AG04450 (cell line): ENCODE measurements at regions of chr7 and their contacts with region 1.

Region 1: GRCh38 chr7:5997222-5997808 is 11.5 kb downstream of the PMS2 start:
- DNase-seq: peak; percentile 32
- H3K4me3 ChIP-seq: no peak overlapping the region
- H3K27ac ChIP-seq: no peak overlapping the region
- H3K27me3 ChIP-seq: no peaks in the 10 kb centered on the region
- CTCF ChIP-seq: peak; percentile 69

Region 2: GRCh38 chr7:5514440-5515035 is 482.8 kb before region 1 on chr7:
- CTCF ChIA-PET with region 1: no interaction called
- POLR2A ChIA-PET with region 1: no interaction called
- DNase-seq: no peak
- H3K4me3 ChIP-seq: peak overlapping the region; percentile 99
- H3K27ac ChIP-seq: peak overlapping the region; percentile 98
- H3K27me3 ChIP-seq: no peaks in the 10 kb centered on the region
- CTCF ChIP-seq: no peak

Region 3: DNA sequence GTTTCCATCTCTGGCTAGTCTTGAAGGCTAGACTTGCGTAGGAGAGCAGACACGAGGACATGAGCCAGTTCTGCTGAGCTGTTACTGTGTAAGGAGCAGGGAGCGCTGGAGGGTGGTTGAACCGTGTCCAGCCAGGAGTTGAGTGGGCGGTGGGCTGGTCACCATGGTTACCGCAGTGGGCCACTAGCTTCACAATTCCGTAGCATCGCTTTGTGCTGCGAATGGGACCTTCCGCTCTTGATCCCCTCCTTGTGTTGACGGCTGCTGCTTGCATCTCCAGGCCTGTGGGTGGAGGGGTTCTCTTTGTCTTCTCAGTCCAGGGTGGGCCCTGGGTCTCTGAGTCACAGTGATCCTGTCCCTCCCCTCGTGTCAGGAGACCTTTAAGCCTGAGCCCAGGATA is 166.1 kb before region 1 on chr7:
- CTCF ChIA-PET with region 1: no interaction called
- POLR2A ChIA-PET with region 1: no interaction called
- DNase-seq: no peak
- H3K4me3 ChIP-seq: no peak overlapping the region
- H3K27ac ChIP-seq: no peak overlapping the region
- H3K27me3 ChIP-seq: no peaks in the 10 kb centered on the region
- CTCF ChIP-seq: no peak

Region 4: DNA sequence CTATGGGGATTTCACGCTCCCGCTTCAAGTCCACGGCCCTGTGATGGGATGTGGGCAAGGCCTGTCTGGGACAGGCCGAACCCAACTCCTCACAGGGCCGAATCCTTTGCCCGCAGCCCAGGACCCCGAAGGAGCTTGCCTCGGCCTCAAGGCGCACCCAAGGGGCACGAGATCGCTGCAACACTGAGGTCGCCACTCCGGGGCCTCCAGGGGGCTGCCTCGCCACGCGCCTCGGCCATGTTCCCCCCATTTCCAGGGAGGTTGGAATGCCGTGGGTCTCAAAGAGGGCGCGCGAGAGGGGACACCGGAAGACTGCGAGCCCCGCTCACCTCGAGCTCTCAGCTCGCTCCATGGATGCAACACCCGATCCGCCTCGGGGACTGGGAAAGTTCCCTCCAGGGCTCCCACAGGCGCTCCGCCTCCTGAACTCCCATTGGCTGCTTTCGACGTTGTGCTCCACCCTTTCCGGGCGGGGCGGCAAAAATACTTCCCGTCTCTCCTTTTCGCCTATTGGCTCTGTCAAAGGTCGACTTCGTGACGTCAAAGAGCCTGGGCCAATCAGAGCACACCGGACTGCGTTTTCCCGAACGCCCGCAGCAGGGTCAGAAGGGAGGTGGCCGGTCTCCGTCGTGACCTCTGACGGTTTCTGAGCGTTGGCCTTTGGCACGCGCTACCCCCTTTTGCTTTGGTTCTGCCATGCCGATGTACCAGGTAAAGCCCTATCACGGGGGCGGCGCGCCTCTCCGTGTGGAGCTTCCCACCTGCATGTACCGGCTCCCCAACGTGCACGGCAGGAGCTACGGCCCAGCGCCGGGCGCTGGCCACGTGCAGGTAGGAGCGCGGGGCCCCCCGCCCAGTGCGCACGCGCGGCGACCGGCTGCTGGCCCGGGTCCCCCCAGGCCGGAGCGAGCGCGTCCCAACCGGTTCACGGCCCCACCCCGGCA is 11.6 kb after region 1 on chr7 and contains the starts of genes AIMP2 and PMS2:
- CTCF ChIA-PET with region 1: interaction called, 15 read pairs
- POLR2A ChIA-PET with region 1: interaction called, 3 read pairs
- DNase-seq: peak; percentile 93
- H3K4me3 ChIP-seq: peak within 1 kb of the TSS; percentile 89
- H3K27ac ChIP-seq: peak within 1 kb of the TSS; percentile 90
- H3K27me3 ChIP-seq: no peaks in the 10 kb centered on the region
- CTCF ChIP-seq: 0 out of 2 replicates have a peak, but pooled peaks have one; percentile 6
- polyA plus RNA-seq, gene AIMP2: 58.5 and 60.3 TPM in 2 replicates
- polyA plus RNA-seq, gene PMS2: 11.1 and 12.9 TPM in 2 replicates

Region 5: GRCh38 chr7:6026011-6026819 is 28.9 kb after region 1 on chr7:
- CTCF ChIA-PET with region 1: interaction called, 13 read pairs
- POLR2A ChIA-PET with region 1: no interaction called
- DNase-seq: no peak
- H3K4me3 ChIP-seq: no peak overlapping the region
- H3K27ac ChIP-seq: no peak overlapping the region
- H3K27me3 ChIP-seq: no peaks in the 10 kb centered on the region
- CTCF ChIP-seq: peak; percentile 28; the same call in 1 of the 2 replicates

Region 6: DNA sequence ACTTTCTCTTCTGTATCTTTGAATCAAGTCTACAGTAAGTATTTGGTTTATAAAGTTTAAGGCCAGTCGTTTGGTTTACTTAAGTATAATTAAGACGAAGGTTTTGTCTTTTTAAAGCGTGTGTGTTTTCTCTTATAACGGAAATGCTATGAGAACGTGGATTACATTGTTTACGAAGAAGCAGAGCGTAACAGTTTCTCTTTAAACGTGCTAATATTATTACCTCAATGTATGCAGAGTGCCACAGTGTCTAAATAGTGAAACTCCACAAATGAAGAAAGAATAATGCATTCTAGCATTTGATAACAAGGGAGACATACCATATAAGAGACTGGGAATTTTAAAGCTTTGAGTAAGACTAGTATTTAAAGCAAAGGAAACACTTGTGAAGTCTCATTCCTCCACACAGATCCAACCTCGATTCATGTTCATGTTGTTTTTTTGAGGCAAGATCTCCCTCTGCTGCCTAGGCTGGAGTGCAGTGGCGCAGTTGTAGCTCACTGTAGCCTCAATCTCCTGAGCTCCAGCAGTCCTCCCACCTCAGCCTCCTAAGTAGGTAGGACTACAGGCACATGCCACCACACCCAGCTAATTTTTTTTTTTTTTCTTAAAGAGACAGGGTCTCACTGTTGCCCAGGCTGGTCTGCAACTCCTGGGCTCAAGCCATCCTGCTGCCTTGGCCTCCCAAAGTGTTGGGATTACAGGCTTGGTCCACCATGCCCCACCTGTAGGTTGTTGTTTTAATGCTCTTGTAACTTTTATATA is 109.0 kb after region 1 on chr7:
- CTCF ChIA-PET with region 1: interaction called, 23 read pairs
- POLR2A ChIA-PET with region 1: no interaction called
- DNase-seq: no peak
- H3K4me3 ChIP-seq: peak overlapping the region; percentile 78
- H3K27ac ChIP-seq: no peak overlapping the region
- H3K27me3 ChIP-seq: no peaks in the 10 kb centered on the region
- CTCF ChIP-seq: peak; percentile 13; the same call in 1 of the 2 replicates

Region 7: GRCh38 chr7:6323967-6324701 is 326.8 kb after region 1 on chr7:
- CTCF ChIA-PET with region 1: interaction called, 16 read pairs
- POLR2A ChIA-PET with region 1: no interaction called
- DNase-seq: no peak
- H3K4me3 ChIP-seq: no peak overlapping the region
- H3K27ac ChIP-seq: no peak overlapping the region
- H3K27me3 ChIP-seq: no peaks in the 10 kb centered on the region
- CTCF ChIP-seq: no peak

Region 8: GRCh38 chr7:6350433-6351058 is 353.2 kb after region 1 on chr7:
- CTCF ChIA-PET with region 1: interaction called, 10 read pairs
- POLR2A ChIA-PET with region 1: no interaction called
- DNase-seq: peak; percentile 18
- H3K4me3 ChIP-seq: no peak overlapping the region
- H3K27ac ChIP-seq: no peak overlapping the region
- H3K27me3 ChIP-seq: peaks cover 4% of the 10 kb centered on the region
- CTCF ChIP-seq: no peak